ENCODE measurements at regions of chr11 and their contacts with region 1.

Region 1: DNA sequence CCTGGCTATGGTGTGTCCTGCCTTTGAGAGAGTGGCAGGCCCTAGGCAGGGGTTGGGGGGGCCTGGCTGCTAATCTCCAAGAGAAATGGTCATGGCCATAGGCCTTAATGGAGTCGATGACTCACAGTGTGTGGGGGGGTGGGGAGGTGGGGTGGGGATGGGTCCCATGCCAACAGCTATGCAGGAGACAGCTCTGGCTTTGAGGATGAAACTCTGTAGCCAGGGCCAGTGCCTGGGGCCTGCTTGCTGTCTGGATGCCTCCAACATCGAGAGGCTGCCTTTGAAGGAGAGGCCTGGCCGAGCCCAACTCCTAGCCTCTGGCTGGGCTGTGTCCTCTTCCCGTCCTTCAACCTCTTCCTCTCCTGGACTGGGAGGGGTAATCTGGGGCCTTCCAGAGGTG is 23.9 kb upstream of the TSPAN18 start:
- DNase-seq: no peak
- ATAC-seq: peak in 5 of 8 donors; percentile 10 to 61 (median 21)
- H3K4me3 ChIP-seq: no peak overlapping the region
- H3K27ac ChIP-seq: peak overlapping the region in 5 of 10 donors; percentile 20 to 53 (median 36)
- H3K4me1 ChIP-seq: peaks cover 8 to 51% (median 25%) of the 10 kb centered on the region in 9 donors
- H3K27me3 ChIP-seq: no peaks in the 10 kb centered on the region
- CTCF ChIP-seq: no peak

Region 2: GRCh38 chr11:44658506-44658850 is 44.4 kb before region 1 on chr11:
- intact Hi-C with region 1: loop called in 1 of 10 experiments (anchors 5 kb)
- DNase-seq: no peak
- ATAC-seq: no peak
- H3K4me3 ChIP-seq: no peak overlapping the region
- H3K27ac ChIP-seq: no peak overlapping the region
- H3K4me1 ChIP-seq: peaks cover 0 to 33% (median 3%) of the 10 kb centered on the region in 9 donors
- H3K27me3 ChIP-seq: no peaks in the 10 kb centered on the region
- CTCF ChIP-seq: peak in 8 of 9 donors; percentile 12 to 39 (median 30)